ENCODE measurements at regions of chr9 and their contacts with region 1.

Region 1: DNA sequence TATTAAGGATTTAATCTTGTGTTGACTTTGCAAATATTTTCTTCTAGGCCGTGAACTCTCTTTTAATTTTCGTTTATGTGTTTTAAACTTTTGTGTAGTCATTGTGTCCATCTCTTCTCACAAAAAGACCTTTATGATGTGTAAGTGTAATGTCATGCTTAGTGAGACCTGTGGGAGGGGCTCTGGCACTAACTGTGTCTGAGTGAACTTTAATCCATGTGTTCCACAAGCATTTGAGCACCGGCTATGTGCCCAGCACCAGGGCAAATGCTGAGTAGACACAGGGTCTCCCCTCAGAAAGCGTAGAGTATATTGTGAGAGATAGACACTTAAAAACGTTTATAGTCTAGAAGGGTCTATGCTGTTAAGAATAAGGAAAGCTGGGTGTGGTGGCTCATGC is 272.6 kb upstream of the TUT7 start:
- DNase-seq: no peak
- H3K4me3 ChIP-seq: no peak overlapping the region
- H3K27ac ChIP-seq: no peak overlapping the region
- H3K27me3 ChIP-seq: no peaks in the 10 kb centered on the region
- CTCF ChIP-seq: no peak

Region 2: DNA sequence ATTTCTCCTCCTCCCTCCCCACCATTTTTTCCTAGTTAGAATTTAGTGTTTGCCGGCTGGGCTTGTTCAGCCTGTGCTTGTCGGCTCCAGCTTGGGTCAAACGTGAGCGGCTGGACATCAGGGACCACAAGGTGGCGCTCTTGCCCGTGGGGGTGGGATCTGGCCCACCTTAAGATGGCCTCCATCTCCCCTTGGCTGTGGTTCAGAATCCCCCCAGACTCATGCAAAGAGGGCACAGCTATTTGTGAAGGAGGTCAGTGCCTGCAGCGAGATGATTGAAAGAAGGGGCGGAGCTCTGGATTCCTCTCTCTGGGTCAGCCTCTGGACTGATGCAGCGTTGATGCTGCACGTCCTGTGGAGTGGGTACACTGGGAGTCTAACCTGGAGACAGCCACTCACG is 10.7 kb after region 1 on chr9:
- CTCF ChIA-PET with region 1: interaction called, 17 read pairs
- POLR2A ChIA-PET with region 1: no interaction called
- DNase-seq: no peak
- H3K4me3 ChIP-seq: no peak overlapping the region
- H3K27ac ChIP-seq: no peak overlapping the region
- H3K27me3 ChIP-seq: peaks cover 2% of the 10 kb centered on the region
- CTCF ChIP-seq: peak; percentile 84

Region 3: GRCh38 chr9:86741311-86742208 is 114.8 kb after region 1 on chr9:
- CTCF ChIA-PET with region 1: no interaction called
- POLR2A ChIA-PET with region 1: no interaction called
- DNase-seq: no peak
- H3K4me3 ChIP-seq: no peak overlapping the region
- H3K27ac ChIP-seq: no peak overlapping the region
- H3K27me3 ChIP-seq: peaks cover 3% of the 10 kb centered on the region
- CTCF ChIP-seq: no peak

Measured in AG04450 (cell line).